Panc1 (cell line): ENCODE measurements at regions of chr16 and their contacts with region 1.

Region 1: GRCh38 chr16:85746008-85746781 is 4.7 kb downstream of the C16orf74 start:
- DNase-seq: no peak
- ATAC-seq: no peak
- H3K4me3 ChIP-seq: no peak overlapping the region
- H3K27ac ChIP-seq: no peak overlapping the region
- H3K4me1 ChIP-seq: peaks cover 5% of the 10 kb centered on the region; the same call in 1 of the 2 replicates
- H3K27me3 ChIP-seq: no peaks in the 10 kb centered on the region
- CTCF ChIP-seq: no peak

Region 2: GRCh38 chr16:85774136-85774535 is 27.9 kb after region 1 on chr16:
- CTCF ChIA-PET with region 1: interaction called, 10 read pairs
- POLR2A ChIA-PET with region 1: no interaction called
- in situ Hi-C with region 1: no loop called
- intact Hi-C with region 1: no loop called
- DNase-seq: no peak
- ATAC-seq: no peak
- H3K4me3 ChIP-seq: no peak overlapping the region
- H3K27ac ChIP-seq: no peak overlapping the region
- H3K4me1 ChIP-seq: no peaks in the 10 kb centered on the region
- H3K27me3 ChIP-seq: no peaks in the 10 kb centered on the region
- CTCF ChIP-seq: no peak

Region 3: DNA sequence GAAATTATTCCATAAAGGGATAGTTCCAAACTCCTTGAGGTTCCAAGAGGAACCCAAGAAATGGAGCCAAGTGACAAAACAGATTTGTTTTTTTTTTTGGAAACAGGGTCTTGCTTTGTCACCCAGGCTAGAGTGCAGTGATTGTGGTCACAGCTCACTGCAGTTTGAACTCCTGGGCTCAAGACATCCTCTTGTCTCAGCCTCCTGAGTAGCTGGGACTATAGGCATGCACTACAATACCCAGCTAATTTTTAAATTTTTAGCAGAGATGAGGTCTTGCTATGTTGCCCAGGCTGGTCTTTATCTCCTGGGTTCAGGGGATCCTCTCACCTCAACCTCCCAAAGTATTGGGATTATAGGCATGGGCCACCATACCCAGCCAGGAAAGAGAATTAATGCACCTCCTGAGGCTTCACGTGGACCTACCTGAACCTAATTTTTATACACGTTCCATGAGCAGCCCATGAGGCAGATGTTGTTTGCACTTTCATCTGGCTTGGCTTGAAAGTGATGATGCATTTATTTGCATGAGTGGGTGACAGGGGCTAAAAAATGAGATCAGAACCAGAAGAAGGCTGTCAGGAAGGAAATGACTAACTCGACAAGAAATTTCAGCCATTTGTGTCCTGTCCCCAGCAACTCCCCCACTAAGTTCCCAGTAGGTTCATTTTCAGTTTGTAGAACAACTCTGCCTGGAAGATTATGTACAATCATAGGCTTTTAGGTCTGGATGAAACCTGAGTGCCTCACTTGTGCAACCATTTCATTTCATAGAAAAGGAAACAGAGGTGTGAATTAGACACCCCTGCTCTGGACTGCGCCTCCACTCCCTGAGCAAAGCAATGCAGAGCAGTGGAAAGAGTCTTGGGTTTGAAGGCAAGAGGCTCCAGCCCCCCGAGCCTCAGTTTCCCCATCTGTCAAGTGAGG is 142.5 kb after region 1 on chr16:
- CTCF ChIA-PET with region 1: no interaction called
- POLR2A ChIA-PET with region 1: no interaction called
- in situ Hi-C with region 1: no loop called
- intact Hi-C with region 1: no loop called
- DNase-seq: no peak
- ATAC-seq: no peak
- H3K4me3 ChIP-seq: no peak overlapping the region
- H3K27ac ChIP-seq: no peak overlapping the region
- H3K4me1 ChIP-seq: no peaks in the 10 kb centered on the region
- H3K27me3 ChIP-seq: peaks cover 5% of the 10 kb centered on the region; the same call in 1 of the 2 replicates
- CTCF ChIP-seq: no peak

Region 4: DNA sequence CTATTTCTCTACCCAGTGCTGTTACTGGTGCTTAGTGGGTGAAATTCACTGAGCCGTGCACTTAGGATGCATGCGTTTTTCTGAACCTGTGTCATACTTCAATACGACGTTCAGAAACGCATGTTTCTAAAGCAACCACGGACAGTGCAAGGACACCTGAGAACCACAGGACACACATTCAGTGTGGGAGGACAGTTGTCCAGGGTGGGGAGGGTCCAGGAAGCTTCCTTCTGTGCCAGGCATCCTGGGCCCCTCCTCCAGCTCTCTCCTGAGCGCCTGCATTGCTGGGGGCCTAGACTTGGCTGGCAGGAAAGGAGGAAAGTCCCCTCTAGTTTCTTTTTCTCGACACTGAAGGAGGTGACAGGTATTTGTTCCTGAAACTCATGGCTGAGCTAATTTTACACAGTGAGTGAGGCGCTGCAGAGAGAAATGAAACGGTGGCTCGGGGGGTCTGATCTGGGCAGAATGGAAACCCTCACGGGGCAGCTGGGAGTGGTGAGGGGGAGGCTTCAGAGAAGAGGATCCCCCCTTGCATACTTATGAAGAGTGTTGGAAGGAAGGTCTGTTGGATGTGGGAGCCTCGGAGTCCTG is 242.6 kb after region 1 on chr16:
- CTCF ChIA-PET with region 1: no interaction called
- POLR2A ChIA-PET with region 1: no interaction called
- in situ Hi-C with region 1: no loop called
- intact Hi-C with region 1: no loop called
- DNase-seq: no peak
- ATAC-seq: no peak
- H3K4me3 ChIP-seq: no peak overlapping the region
- H3K27ac ChIP-seq: no peak overlapping the region
- H3K4me1 ChIP-seq: no peaks in the 10 kb centered on the region
- H3K27me3 ChIP-seq: peaks cover 2% of the 10 kb centered on the region; the same call in 1 of the 2 replicates
- CTCF ChIP-seq: no peak